CD14-positive monocyte (primary cell): ENCODE measurements at regions of chr14 and their contacts with region 1.

Region 1: DNA sequence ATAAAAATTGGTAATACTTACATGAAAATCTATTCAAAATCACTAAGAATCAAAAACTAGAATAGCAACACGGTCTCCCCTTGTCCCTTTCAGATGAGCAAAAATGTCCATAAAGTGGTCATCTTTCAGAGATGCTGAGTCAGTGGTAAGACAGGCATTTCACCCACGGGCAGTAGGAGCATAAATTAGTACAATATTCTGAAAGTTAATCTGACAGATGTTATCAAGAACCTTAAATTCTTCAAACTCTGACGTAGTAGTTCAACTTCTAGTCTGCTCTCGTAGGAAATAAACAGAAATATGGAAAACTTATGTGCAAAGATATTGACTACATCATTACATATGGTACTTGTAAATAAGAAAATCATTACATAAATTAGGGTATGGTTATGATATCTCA is 33.1 kb upstream of the GNPNAT1 start:
- DNase-seq: no peak
- H3K4me3 ChIP-seq: no peak overlapping the region
- H3K4me3 Mint-ChIP-seq: peak overlapping the region in 1 of 2 donors; percentile 42
- H3K27ac ChIP-seq: no peak overlapping the region
- H3K27ac Mint-ChIP-seq: no peak overlapping the region
- H3K4me1 ChIP-seq: no peaks in the 10 kb centered on the region
- H3K4me1 Mint-ChIP-seq: no peaks in the 10 kb centered on the region
- H3K27me3 ChIP-seq: peaks cover 2 to 4% of the 10 kb centered on the region in 2 donors
- H3K27me3 Mint-ChIP-seq: peaks cover 2 to 10% (median 7%) of the 10 kb centered on the region in 3 donors
- CTCF ChIP-seq: no peak

Region 2: GRCh38 chr14:52729925-52730667 is 94.4 kb before region 1 on chr14 and contains the start of gene STYX:
- intact Hi-C with region 1: no loop called
- DNase-seq: peak; percentile 93 to 97 (median 94)
- H3K4me3 ChIP-seq: peak within 1 kb of the TSS; percentile 78 to 98 (median 94)
- H3K4me3 Mint-ChIP-seq: peak within 1 kb of the TSS; percentile 94 to 95
- H3K27ac ChIP-seq: peak within 1 kb of the TSS; percentile 71 to 87
- H3K27ac Mint-ChIP-seq: peak within 1 kb of the TSS; percentile 89 to 96 (median 91)
- H3K4me1 ChIP-seq: peaks cover 19 to 22% of the 10 kb centered on the region in 2 donors
- H3K4me1 Mint-ChIP-seq: peaks cover 23% of the 10 kb centered on the region
- H3K27me3 ChIP-seq: no peaks in the 10 kb centered on the region
- H3K27me3 Mint-ChIP-seq: no peaks in the 10 kb centered on the region
- CTCF ChIP-seq: no peak
- polyA plus RNA-seq, gene STYX: 7.3 to 16.7 (median 12.0) TPM

Region 3: DNA sequence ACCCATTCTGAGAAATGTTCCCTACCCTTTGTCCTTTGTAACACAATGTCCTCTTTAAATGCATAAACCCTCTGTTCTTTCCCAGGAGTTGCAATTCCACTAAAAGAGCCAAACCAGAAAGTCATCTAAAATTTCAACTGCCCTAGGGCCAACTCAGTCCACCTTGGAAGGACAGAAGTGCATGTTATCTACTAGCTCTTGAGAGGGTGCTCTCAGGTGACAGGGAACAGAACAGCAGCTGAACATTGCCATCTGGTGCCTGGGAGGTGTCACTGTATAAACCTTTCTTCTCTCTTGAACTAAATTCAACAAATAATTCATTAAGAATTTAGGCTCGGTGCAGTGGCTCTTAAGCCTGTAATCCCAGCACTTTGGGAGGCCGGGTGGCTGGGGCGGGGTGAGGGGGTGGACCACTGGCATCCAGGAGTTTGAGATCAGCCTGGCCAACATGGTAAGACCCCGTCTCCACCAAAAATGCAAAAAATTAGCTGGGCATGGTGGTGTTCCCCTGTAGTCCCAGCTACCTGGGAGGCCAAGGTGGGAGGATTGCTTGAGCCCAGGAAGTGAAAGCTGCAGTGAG is 136.6 kb after region 1 on chr14:
- intact Hi-C with region 1: loop called (anchors 2 kb)
- DNase-seq: peak; percentile 10 to 23 (median 20)
- H3K4me3 ChIP-seq: no peak overlapping the region
- H3K4me3 Mint-ChIP-seq: no peak overlapping the region
- H3K27ac ChIP-seq: no peak overlapping the region
- H3K27ac Mint-ChIP-seq: no peak overlapping the region
- H3K4me1 ChIP-seq: no peaks in the 10 kb centered on the region
- H3K4me1 Mint-ChIP-seq: no peaks in the 10 kb centered on the region
- H3K27me3 ChIP-seq: no peaks in the 10 kb centered on the region
- H3K27me3 Mint-ChIP-seq: peaks cover 0 to 7% (median 4%) of the 10 kb centered on the region in 3 donors
- CTCF ChIP-seq: peak; percentile 46

Region 4: DNA sequence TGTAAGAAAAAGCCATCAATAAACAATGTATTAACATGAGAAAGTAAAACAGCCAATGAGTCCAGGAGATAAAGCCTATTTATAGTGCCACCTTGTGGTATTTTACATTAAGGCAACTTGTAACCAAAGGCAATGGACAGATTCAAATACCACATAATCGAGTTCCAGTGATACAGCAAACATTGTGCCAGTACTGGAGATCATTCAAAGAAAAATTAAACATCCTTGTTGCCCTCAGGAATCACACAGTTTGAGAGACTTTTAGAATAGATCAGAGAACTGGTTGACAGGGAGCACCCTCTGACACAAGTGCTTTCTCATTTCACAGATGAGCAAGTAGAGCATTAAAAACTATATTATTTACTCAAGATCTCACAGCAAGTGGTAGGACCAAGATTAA is 230.5 kb after region 1 on chr14:
- intact Hi-C with region 1: loop called (anchors 2 to 10 kb)
- DNase-seq: peak; percentile 2 to 46 (median 12)
- H3K4me3 ChIP-seq: no peak overlapping the region
- H3K4me3 Mint-ChIP-seq: no peak overlapping the region
- H3K27ac ChIP-seq: no peak overlapping the region
- H3K27ac Mint-ChIP-seq: no peak overlapping the region
- H3K4me1 ChIP-seq: peaks cover under 1 to 2% of the 10 kb centered on the region in 2 donors
- H3K4me1 Mint-ChIP-seq: peaks cover under 1% of the 10 kb centered on the region
- H3K27me3 ChIP-seq: no peaks in the 10 kb centered on the region
- H3K27me3 Mint-ChIP-seq: no peaks in the 10 kb centered on the region
- CTCF ChIP-seq: peak; percentile 84

Region 5: DNA sequence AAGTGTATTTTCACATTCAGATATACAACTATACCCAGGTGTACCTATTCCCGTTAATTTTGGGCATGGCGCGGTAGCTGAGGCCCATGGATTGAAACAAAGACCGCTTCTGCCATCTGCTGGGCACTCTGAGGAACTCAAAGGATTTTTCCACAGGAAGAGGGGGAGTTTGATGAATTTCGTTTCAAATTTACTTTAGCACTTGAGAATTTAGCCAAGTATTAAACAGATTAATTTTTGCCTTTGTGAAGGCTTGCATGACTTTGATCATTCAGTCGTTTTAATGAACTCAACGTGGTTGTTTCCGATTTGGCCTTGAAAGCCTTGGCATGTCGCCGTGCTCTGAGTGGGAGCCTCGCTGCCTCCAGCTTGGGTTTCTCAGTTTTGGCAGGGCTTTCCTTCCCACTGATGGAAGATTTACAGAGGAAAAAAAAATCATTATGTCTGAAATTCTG is 481.8 kb after region 1 on chr14:
- intact Hi-C with region 1: loop called in 1 of 2 experiments (anchors 10 kb)
- DNase-seq: peak; percentile 11 to 26 (median 18)
- H3K4me3 ChIP-seq: peak overlapping the region in 1 of 3 experiments; percentile 41
- H3K4me3 Mint-ChIP-seq: peak overlapping the region; percentile 20 to 67
- H3K27ac ChIP-seq: no peak overlapping the region
- H3K27ac Mint-ChIP-seq: no peak overlapping the region
- H3K4me1 ChIP-seq: no peaks in the 10 kb centered on the region
- H3K4me1 Mint-ChIP-seq: peaks cover 6% of the 10 kb centered on the region
- H3K27me3 ChIP-seq: no peaks in the 10 kb centered on the region
- H3K27me3 Mint-ChIP-seq: peaks cover under 1 to 10% (median 2%) of the 10 kb centered on the region in 3 donors
- CTCF ChIP-seq: peak; percentile 86

Region 6: GRCh38 chr14:54709444-54709843 is 1884.9 kb after region 1 on chr14:
- intact Hi-C with region 1: no loop called
- DNase-seq: no peak
- H3K4me3 ChIP-seq: no peak overlapping the region
- H3K4me3 Mint-ChIP-seq: no peak overlapping the region
- H3K27ac ChIP-seq: no peak overlapping the region
- H3K27ac Mint-ChIP-seq: no peak overlapping the region
- H3K4me1 ChIP-seq: peaks cover 15 to 22% of the 10 kb centered on the region in 2 donors
- H3K4me1 Mint-ChIP-seq: peaks cover 21% of the 10 kb centered on the region
- H3K27me3 ChIP-seq: no peaks in the 10 kb centered on the region
- H3K27me3 Mint-ChIP-seq: peaks cover 0 to 7% (median 0%) of the 10 kb centered on the region in 3 donors
- CTCF ChIP-seq: no peak